Activated T-helper 2 cell treated with anti-CD3 and anti-CD28 coated beads, Interferon-gamma antibody, Interleukin-2, Interleukin-4, amounts not matched to agents 10 μg/mL and 5 μg/mL and 100 μg/mL, durations not matched to agents 14 hours and 24 hours and 36 hours (primary cell): ENCODE measurements at regions of chr3 and their contacts with region 1.

Region 1: DNA sequence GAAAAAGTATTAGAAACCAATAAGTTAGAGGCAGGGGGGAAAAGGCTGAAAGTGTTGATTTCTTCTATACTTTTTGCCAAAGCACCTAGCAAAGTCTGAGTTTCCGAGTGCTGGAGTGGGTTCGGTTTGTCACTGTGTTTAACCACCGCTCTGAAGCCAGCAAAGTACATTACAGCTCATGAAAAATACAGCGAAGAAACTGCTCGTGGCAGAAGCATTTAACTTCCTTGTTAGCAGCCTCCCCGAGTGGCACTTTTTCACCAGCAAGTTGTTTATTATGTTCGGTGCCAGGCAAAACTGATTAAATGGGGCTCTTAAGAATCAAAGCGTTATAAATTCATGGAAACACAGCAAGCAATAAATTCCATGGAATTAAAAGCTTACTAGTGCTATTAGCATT is 313.6 kb downstream of the FOXP1 start:
- DNase-seq: no peak
- H3K4me3 Mint-ChIP-seq: no peak overlapping the region
- H3K27ac Mint-ChIP-seq: no peak overlapping the region
- H3K4me1 Mint-ChIP-seq: peaks cover 38% of the 10 kb centered on the region
- H3K27me3 Mint-ChIP-seq: no peaks in the 10 kb centered on the region

Region 2: GRCh38 chr3:71064288-71064955 is 205.5 kb before region 1 on chr3:
- intact Hi-C with region 1: no loop called
- DNase-seq: peak; percentile 68
- H3K4me3 Mint-ChIP-seq: no peak overlapping the region
- H3K27ac Mint-ChIP-seq: no peak overlapping the region
- H3K4me1 Mint-ChIP-seq: peaks cover 58% of the 10 kb centered on the region
- H3K27me3 Mint-ChIP-seq: no peaks in the 10 kb centered on the region

Region 3: DNA sequence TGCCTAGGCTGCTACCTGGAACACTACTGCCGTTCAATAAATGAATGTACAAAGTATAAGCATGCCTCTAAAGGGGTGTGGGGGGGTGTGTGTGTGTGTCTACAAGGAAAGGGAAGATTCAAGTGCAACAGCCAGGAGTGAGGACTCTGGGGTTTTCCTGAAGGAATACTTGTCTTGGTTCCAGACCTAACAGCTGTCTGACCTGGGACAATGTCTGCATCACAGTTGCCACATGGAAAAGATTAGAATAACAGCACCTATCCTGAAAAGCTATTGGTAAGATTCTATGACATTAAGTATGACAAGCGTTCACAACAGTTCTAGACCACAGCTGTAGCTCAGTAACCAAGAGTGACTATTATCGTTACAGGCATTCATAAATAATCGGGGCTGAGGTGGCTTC is 31.6 kb before region 1 on chr3:
- intact Hi-C with region 1: loop called (anchors 5 kb)
- DNase-seq: no peak
- H3K4me3 Mint-ChIP-seq: no peak overlapping the region
- H3K27ac Mint-ChIP-seq: no peak overlapping the region
- H3K4me1 Mint-ChIP-seq: peaks cover 18% of the 10 kb centered on the region
- H3K27me3 Mint-ChIP-seq: no peaks in the 10 kb centered on the region